ENCODE measurements at regions of chr13 and their contacts with region 1.

Region 1: DNA sequence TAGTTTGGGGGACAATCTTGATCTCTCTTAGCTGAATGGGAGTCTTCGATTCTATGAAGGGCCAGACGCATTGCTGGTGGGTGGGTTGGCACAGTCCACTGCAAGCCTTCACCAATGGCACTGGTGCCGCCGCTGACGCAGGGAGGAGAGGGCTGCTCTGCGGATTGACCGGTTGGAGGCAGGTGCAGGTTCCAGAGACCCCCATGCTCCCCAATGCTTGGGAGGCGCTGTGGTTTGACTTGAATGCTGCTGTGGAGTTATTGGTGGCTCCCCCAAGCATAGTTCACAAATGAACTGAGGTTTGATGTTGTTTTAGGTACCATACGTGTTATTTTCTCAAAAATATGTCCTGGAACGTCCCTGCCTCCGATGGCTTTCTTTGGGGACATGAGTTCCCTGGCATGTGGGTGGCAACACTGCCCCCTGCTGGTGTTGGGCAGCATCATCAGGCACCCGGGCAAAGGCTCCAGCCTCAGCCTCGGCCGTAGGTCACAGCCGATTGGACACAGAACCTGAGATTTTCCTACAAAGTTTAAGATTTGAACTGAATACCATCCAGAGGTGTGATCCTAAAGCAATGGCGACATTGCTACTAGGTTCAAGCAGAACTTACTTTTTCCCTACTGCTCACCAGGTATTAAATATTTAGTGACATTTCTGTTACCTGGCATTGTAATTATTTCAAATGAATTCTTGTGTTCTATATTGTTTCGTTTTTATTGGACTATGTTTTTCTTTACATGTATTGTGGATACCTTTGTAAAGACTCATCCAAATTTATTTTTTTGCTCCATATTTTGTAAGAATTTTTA is 95.5 kb downstream of the ANKRD10 start:
- DNase-seq: peak; percentile 69 to 81
- ATAC-seq: peak; percentile 87 to 95 (median 92)
- H3K4me3 ChIP-seq: no peak overlapping the region
- H3K27ac ChIP-seq: no peak overlapping the region
- H3K4me1 ChIP-seq: peaks cover 0 to 8% (median 0%) of the 10 kb centered on the region in 9 donors
- H3K27me3 ChIP-seq: no peaks in the 10 kb centered on the region
- CTCF ChIP-seq: peak; percentile 82 to 99 (median 98)

Region 2: DNA sequence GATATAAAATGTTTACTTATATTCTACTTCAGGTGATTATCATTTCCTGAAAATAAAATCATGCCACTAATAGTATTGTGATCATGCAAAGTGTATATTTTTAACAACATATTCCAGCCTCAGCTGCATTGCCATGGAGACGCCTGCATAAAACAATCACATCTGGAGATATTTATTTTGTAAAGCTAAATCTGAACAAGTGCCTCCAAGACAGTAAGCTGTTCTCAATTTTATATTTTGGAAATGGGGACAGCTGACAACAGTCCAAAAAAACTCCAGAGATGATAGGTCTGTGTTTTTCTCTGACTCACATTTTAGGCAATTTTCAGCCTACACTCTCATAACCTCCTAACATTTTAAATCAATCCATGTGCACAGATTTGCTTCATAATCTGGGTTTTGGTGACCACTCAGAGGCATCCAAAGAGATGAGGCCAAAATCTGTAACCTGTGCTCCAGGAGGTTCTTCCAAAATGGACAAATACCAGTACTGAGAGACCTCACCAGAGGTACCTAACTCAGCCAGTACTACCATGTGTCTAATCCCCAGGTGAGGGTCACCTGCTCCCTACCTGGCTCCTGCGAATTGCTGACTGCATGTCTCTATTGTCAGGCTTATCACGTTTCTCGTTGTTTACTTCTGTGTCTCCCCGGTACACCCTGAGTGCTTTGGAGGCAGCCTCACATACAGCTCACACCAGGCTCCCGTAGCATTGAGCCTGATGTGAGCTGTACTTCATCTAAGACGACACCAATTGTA is 575.2 kb before region 1 on chr13:
- intact Hi-C with region 1: no loop called
- DNase-seq: peak in 1 of 2 donors; percentile 59
- ATAC-seq: peak in 7 of 8 donors; percentile 11 to 52 (median 36)
- H3K4me3 ChIP-seq: no peak overlapping the region
- H3K27ac ChIP-seq: peak overlapping the region; percentile 9 to 89 (median 71)
- H3K4me1 ChIP-seq: peaks cover 31 to 99% (median 89%) of the 10 kb centered on the region in 9 donors
- H3K27me3 ChIP-seq: no peaks in the 10 kb centered on the region
- CTCF ChIP-seq: no peak

Region 3: GRCh38 chr13:110455941-110456340 is 363.5 kb before region 1 on chr13:
- intact Hi-C with region 1: loop called in 2 of 10 experiments (anchors 5 to 10 kb)
- DNase-seq: peak; percentile 64 to 74
- ATAC-seq: peak; percentile 79 to 92 (median 88)
- H3K4me3 ChIP-seq: no peak overlapping the region
- H3K27ac ChIP-seq: peak overlapping the region in 1 of 10 donors; percentile 10
- H3K4me1 ChIP-seq: peaks cover 0 to 12% (median 5%) of the 10 kb centered on the region in 9 donors
- H3K27me3 ChIP-seq: no peaks in the 10 kb centered on the region
- CTCF ChIP-seq: peak; percentile 55 to 89 (median 80)

Region 4: GRCh38 chr13:110593430-110594130 is 225.8 kb before region 1 on chr13:
- intact Hi-C with region 1: loop called (anchors 1 to 10 kb)
- DNase-seq: no peak
- ATAC-seq: peak; percentile 68 to 93 (median 86)
- H3K4me3 ChIP-seq: no peak overlapping the region
- H3K27ac ChIP-seq: no peak overlapping the region
- H3K4me1 ChIP-seq: no peaks in the 10 kb centered on the region
- H3K27me3 ChIP-seq: no peaks in the 10 kb centered on the region
- CTCF ChIP-seq: peak; percentile 36 to 79 (median 68)

Region 5: GRCh38 chr13:110705826-110706569 is 113.4 kb before region 1 on chr13 and contains the start of gene CARS2:
- intact Hi-C with region 1: loop called in 2 of 10 experiments (anchors 5 to 10 kb)
- DNase-seq: peak; percentile 94 to 97
- ATAC-seq: peak; percentile 97 to 99 (median 98)
- H3K4me3 ChIP-seq: peak within 1 kb of the TSS; percentile 69 to 87 (median 76)
- H3K27ac ChIP-seq: peak within 1 kb of the TSS; percentile 44 to 93 (median 85)
- H3K4me1 ChIP-seq: peaks cover 0 to 48% (median 22%) of the 10 kb centered on the region in 9 donors
- H3K27me3 ChIP-seq: no peaks in the 10 kb centered on the region
- CTCF ChIP-seq: peak in 3 of 9 donors; percentile 10 to 28 (median 17)
- total RNA-seq, gene CARS2: 35.2 to 53.5 (median 42.8) TPM

Region 6: GRCh38 chr13:110715395-110716235 is 103.8 kb before region 1 on chr13:
- intact Hi-C with region 1: loop called in 7 of 10 experiments (anchors 5 to 10 kb)
- DNase-seq: peak; percentile 97 to 99
- ATAC-seq: peak; percentile 68 to 84 (median 81)
- H3K4me3 ChIP-seq: peak overlapping the region; percentile 79 to 98 (median 92)
- H3K27ac ChIP-seq: peak overlapping the region; percentile 17 to 100 (median 100)
- H3K4me1 ChIP-seq: peaks cover 4 to 33% (median 28%) of the 10 kb centered on the region in 9 donors
- H3K27me3 ChIP-seq: no peaks in the 10 kb centered on the region
- CTCF ChIP-seq: peak in 6 of 9 donors; percentile 9 to 55 (median 34)

Region 7: DNA sequence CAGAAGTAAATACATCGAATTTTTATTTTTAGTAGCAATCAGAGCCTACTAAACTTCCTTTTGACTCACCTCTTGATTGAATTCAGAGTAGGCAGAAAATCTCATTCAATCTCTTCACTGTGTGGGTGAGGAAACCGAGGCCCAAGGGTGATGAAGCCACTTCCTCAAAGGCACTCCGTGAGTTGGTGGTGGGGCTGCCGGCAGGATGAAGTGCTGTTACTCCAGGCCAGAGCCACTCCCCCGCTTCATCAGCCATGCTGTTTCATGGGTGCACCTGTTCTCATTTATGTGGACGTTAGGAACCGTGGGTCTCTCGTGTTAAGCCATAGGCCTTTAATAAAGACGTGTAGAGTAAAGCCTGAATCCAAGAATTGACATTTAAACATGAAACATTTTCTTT is 92.7 kb before region 1 on chr13:
- intact Hi-C with region 1: loop called in 4 of 10 experiments (anchors 5 to 10 kb)
- DNase-seq: no peak
- ATAC-seq: no peak
- H3K4me3 ChIP-seq: no peak overlapping the region
- H3K27ac ChIP-seq: no peak overlapping the region
- H3K4me1 ChIP-seq: peaks cover 0 to 14% (median 0%) of the 10 kb centered on the region in 9 donors
- H3K27me3 ChIP-seq: no peaks in the 10 kb centered on the region
- CTCF ChIP-seq: no peak

Region 8: DNA sequence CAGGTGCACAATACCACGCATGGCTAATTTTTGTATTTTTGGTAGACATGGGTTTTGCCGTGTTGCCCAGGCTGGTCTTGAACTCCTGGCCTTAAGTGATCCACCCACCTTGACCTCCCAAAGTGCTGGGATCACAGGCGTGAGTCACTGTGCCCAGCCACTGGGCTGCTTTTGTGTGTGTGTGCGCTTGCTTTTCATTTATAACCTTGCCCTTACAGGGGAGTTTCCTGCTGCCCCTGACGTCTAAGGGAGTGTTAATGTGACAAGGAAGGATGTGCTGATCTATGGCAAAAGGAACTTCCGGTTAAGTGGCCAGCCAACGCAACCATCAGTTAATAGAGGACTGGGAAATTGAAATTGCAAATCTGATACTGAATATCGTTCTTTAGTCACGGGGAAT is 48.2 kb before region 1 on chr13:
- intact Hi-C with region 1: no loop called
- DNase-seq: no peak
- ATAC-seq: peak in 5 of 8 donors; percentile 24 to 85 (median 44)
- H3K4me3 ChIP-seq: no peak overlapping the region
- H3K27ac ChIP-seq: peak overlapping the region in 2 of 10 donors; percentile 45 to 71
- H3K4me1 ChIP-seq: peaks cover 0 to 4% (median 0%) of the 10 kb centered on the region in 9 donors
- H3K27me3 ChIP-seq: peaks cover 0 to 9% (median 3%) of the 10 kb centered on the region in 7 donors
- CTCF ChIP-seq: no peak

Region 9: DNA sequence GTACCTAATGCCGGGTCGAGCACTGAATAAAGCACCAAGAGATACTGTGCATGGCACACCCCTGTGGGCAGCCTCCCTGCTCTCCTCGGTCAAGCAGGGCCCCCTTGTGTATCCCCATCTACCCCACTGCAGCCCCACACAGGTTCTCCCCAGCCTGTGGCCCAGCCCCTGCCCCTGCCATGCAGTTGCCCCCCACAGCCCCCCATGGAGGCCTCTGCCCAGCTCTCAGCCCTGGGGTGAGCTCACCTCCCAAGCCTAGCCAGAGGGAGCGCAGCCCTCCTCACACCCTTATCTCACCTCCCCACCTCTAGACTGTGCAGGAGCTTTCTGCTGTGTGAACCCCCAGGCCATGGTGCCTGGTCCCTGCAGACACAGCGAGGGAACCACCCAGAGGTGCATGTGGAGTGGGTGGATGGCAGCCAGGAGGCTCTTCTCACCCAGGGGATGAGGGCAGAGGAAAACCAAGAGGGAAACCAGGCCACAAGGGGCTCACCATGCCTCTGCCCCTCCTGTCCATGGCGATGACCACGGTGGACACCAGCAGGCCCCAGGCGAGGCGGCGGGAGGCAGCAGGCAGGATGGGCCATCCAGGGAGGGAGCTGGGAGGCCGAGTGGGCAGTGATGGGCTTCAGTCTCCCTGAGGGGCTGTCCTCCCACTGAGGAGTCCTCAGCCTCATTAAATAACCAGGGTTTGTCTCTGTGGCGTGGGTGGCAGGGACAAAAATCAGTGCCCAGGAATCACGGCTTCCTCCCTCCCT is 12.2 kb after region 1 on chr13:
- intact Hi-C with region 1: no loop called
- DNase-seq: no peak
- ATAC-seq: peak in 1 of 8 donors; percentile 11
- H3K4me3 ChIP-seq: no peak overlapping the region
- H3K27ac ChIP-seq: no peak overlapping the region
- H3K4me1 ChIP-seq: no peaks in the 10 kb centered on the region
- H3K27me3 ChIP-seq: peaks cover 0 to 42% (median 14%) of the 10 kb centered on the region in 7 donors
- CTCF ChIP-seq: no peak

Region 10: GRCh38 chr13:110957181-110957884 is 137.9 kb after region 1 on chr13:
- intact Hi-C with region 1: no loop called
- DNase-seq: no peak
- ATAC-seq: no peak
- H3K4me3 ChIP-seq: no peak overlapping the region
- H3K27ac ChIP-seq: no peak overlapping the region
- H3K4me1 ChIP-seq: peaks cover 0 to 16% (median 0%) of the 10 kb centered on the region in 9 donors
- H3K27me3 ChIP-seq: no peaks in the 10 kb centered on the region
- CTCF ChIP-seq: peak in 2 of 9 donors; percentile 14 to 18